Left colon (tissue), 2 donors: ENCODE measurements at regions of chr15 and their contacts with region 1.

Region 1: GRCh38 chr15:89647191-89647851 is 7.9 kb downstream of the KIF7 start:
- DNase-seq: peak; percentile 54 to 89
- ATAC-seq: peak; percentile 92

Region 2: GRCh38 chr15:89693686-89694085 is 46.4 kb after region 1 on chr15:
- intact Hi-C with region 1: no loop called
- DNase-seq: no peak
- ATAC-seq: no peak

Region 3: DNA sequence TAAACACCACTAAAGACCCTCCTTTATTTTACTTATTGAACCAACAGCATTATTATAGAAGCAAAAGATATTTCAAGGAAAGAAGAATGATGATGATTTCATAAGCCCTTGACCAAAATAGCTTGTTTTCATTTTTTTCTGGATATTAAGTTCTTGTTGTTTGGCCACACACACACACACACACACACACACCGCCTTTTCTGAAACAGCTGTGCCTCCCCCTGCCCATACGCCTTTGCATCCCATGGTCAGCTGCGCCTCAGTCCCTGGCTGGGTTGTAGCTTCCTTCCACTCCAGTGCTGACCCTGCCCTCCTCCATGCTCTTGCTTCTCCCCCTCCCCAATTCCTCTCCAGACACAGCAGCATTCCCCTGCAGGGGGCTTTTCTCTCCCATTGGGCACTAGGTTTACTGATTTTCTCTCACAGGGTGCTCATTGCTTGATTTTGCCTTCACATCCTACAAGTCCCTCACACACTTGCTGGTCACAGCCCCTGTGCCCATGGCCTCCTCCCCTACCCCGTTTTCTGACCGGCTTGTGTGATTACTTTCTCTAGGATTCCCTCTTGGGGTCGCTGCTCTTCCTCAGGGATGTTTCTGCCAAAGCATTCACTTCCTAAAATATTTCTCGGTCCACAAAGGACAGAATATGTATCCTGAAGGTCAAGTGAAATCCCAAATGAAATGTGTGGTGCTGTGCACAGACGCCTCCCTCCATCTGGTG is 85.3 kb after region 1 on chr15:
- intact Hi-C with region 1: loop called in 1 of 2 experiments (anchors 10 kb)
- DNase-seq: no peak
- ATAC-seq: no peak

Region 4: DNA sequence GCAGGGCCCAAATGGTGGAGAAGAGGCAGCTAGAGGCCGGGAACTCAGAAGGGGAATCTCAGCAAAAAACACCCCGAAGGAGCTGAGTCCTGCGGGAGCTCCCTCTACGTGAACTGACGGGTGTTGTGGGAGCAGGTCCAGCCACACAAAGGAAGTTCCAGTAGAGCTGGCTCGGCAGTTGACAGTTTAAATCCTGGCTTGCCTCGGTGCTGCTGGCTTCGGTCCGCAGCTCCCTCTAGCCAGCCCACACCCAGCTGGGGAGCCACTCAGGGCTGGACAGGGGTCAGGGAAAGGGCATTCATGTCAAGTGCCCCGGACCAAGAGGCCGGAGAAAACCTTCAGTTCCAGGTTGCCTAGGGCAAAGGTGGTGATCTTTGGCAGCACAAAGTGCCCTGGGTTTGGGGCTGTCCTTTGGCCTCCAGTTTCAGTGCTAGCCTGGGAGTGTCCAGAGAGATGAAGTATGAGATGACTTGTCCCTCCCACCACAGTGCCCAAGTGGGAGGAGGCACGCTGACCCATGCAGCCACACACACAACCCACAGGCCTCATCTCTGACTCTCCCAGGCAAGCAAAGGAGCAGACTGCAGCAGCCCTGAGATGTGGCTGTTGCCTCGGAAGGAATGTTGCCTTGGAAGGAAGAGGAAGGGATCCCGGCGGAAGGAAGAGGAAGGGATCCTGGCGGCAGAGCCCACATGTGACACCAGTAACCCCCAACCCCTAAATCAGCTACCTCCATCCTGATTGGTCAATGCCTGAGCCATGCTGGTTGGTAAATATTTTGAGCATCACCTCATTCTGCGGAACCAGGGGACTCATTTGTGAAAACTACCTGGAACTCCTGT is 181.1 kb after region 1 on chr15:
- intact Hi-C with region 1: no loop called
- DNase-seq: peak; percentile 41 to 48
- ATAC-seq: peak; percentile 76